Esophagus muscularis mucosa (tissue), 4 donors: ENCODE measurements at regions of chr7 and their contacts with region 1.

Region 1: DNA sequence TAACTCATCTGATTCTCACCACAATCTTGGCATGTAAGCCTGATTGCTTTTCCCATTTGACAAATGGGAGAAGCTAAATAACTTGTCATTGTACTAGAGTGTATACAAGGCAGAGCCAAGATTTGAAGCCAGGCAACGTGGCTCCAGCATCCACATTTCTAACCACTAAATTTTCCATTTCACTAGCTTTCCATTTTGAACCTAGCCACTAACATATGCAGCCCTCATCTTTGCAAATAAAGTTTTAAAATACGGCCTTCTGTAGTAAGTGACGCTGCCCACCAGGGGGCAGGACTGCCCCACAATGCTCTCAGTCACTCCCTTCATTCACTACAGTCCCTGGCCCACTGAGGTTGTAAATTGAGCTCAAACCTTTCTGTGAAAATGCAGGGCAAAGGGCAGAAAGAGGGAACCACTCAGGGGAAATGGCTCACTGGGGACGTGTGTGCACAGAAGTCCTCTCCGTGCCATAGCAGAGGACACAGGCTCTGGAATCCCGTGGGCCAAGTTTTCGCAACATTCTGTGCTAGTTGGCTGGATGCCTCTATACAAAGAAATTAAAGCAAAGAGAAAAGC is 315.7 kb downstream of the TNS3 start:
- DNase-seq: no peak
- H3K4me3 ChIP-seq: no peak overlapping the region
- H3K27ac ChIP-seq: no peak overlapping the region
- H3K4me1 ChIP-seq: peaks cover 3 to 13% (median 12%) of the 10 kb centered on the region in 4 donors
- H3K27me3 ChIP-seq: peaks cover 0 to 4% (median 0%) of the 10 kb centered on the region in 4 donors
- CTCF ChIP-seq: peak; percentile 90 to 95 (median 91)
- EP300 ChIP-seq: no peak
- POLR2A ChIP-seq: no peak

Region 2: GRCh38 chr7:47591655-47592572 is 325.7 kb after region 1 on chr7:
- intact Hi-C with region 1: no loop called
- DNase-seq: no peak
- H3K4me3 ChIP-seq: no peak overlapping the region
- H3K27ac ChIP-seq: peak overlapping the region in 3 of 4 donors; percentile 22 to 35 (median 31)
- H3K4me1 ChIP-seq: peaks cover 3 to 46% (median 37%) of the 10 kb centered on the region in 4 donors
- H3K27me3 ChIP-seq: no peaks in the 10 kb centered on the region
- CTCF ChIP-seq: no peak
- EP300 ChIP-seq: no peak
- POLR2A ChIP-seq: no peak

Region 3: DNA sequence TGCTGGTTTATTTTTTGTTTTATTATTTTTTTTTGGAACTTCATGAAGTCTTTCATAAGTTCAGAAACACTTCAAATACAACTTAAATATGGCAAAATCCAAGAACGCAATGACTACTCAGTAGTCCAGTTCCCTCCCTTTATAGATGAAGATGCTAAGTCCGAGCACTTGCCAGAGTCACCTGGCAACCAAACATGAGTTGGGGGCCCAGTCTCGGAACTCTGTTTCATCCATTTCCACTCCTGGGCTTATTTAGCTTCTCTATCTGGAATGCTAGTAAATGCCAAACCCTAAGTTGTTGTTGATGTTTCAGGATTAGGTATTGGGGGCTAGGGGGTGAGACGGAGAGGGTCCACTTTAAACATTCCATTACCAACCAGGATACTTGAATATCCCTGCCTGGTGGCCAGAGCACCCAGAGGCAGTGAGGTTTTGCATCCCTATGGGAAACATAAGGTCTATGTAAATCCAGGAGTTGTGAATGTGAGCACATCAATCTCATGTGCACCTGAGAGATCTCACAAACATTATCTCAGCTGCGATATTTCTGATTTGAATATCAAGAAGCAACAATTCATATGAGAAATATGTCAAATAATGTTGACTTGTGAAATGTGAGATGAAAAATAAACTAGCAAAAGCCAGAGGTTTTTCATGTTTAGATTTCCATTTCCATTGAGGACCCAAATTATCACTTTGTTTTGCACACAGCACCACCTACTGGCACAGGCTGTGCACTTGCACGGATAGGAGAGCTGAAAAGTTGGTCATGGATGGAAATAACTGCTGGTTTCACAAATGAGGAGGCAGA is 552.8 kb after region 1 on chr7:
- intact Hi-C with region 1: loop called (anchors 2 kb)
- DNase-seq: no peak
- H3K4me3 ChIP-seq: no peak overlapping the region
- H3K27ac ChIP-seq: no peak overlapping the region
- H3K4me1 ChIP-seq: peaks cover 6 to 25% (median 21%) of the 10 kb centered on the region in 4 donors
- H3K27me3 ChIP-seq: no peaks in the 10 kb centered on the region
- CTCF ChIP-seq: peak; percentile 91 to 95 (median 93)
- EP300 ChIP-seq: no peak
- POLR2A ChIP-seq: no peak